ENCODE measurements at regions of chr14 and their contacts with region 1.

Region 1: DNA sequence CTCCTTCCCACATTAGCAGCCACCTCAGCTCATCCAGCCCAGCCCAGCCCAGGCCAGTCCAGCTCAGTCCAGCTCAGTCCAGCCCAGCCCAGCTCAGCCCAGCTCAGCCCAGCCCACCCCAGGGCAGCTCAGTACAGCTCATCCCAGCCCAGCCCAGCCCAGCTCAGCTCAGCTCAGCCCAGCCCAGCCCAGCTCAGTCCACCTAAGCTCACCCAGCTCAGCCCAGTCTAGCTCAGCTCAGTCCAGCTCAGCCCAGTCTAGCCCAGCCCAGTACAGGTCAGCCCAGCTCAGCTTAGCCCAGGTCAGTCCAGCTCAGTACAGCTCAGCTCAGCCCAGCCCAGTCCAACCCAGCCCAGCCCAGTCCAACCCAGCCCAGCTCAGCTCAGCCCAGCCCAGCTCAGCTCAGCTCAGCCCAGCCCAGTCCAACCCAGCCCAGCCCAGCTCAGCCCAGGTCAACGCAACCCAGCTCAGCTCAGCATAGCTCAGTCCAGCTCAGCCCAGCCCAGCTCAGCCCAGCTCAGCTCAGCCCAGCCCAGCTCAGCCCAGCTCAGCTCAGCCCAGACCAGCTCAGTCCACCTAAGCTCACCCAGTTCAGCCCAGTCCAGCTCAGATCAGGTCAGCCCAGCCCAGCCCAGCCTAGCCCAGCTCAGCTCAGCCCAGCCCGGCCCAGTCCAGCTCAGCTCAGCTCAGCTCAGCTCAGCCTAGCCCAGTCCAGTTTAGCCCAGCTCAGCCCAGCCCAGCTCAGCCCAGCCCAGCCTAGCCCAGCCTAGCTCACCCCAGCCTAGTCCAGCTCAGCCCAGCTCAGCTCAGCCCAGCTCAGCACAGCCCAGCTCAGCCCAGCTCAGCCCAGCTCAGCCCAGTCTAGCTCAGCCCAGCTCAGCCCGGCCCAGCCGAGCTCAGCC is 63.0 kb downstream of the TMEM121 start:
- DNase-seq: peak in 1 of 6 donors; percentile 69
- ATAC-seq: no peak
- H3K4me3 ChIP-seq: no peak overlapping the region
- H3K27ac ChIP-seq: no peak overlapping the region
- H3K4me1 ChIP-seq: no peaks in the 10 kb centered on the region
- H3K27me3 ChIP-seq: no peaks in the 10 kb centered on the region
- CTCF ChIP-seq: no peak

Region 2: DNA sequence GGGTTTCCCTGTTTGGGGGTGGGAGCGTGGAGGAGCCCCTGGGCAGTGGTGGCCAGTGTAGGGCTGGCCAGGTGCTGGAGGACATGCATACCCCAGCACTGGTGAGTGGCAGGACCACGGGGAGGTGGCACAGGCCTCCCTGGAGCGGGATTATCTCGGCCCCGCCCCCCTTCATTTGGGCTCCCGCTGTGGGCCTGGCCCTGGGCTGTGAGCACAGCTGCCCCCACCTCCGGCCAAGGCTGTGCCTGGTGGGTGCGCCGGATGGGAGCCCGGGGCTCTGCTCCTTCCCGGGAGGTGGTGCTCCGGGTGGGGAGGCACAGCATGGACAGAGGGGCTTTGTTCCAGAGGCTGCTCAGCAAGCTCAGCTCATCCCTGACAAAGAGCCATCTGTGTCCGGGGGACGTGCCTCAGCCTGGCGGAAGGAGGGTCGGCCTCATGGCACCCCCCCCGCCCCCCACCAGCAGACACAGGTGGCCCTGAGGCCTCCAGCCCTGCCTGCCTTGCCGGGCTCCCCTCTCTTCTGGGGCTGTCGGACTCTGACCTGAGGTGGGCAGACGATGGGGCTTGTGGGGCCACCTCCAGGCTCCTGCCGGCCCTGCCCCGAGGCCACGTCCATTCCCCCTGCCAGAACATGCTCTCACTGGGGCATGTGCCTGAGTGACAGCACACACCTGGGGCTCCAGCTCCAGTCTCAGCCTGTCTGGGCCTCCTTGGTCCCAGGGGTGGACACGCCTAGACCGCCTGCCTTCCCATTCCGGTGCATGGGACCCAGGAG is 90.0 kb before region 1 on chr14:
- intact Hi-C with region 1: no loop called
- DNase-seq: peak in 2 of 6 donors; percentile 54 to 66
- ATAC-seq: no peak
- H3K4me3 ChIP-seq: no peak overlapping the region
- H3K27ac ChIP-seq: no peak overlapping the region
- H3K4me1 ChIP-seq: no peaks in the 10 kb centered on the region
- H3K27me3 ChIP-seq: no peaks in the 10 kb centered on the region
- CTCF ChIP-seq: no peak

Region 3: DNA sequence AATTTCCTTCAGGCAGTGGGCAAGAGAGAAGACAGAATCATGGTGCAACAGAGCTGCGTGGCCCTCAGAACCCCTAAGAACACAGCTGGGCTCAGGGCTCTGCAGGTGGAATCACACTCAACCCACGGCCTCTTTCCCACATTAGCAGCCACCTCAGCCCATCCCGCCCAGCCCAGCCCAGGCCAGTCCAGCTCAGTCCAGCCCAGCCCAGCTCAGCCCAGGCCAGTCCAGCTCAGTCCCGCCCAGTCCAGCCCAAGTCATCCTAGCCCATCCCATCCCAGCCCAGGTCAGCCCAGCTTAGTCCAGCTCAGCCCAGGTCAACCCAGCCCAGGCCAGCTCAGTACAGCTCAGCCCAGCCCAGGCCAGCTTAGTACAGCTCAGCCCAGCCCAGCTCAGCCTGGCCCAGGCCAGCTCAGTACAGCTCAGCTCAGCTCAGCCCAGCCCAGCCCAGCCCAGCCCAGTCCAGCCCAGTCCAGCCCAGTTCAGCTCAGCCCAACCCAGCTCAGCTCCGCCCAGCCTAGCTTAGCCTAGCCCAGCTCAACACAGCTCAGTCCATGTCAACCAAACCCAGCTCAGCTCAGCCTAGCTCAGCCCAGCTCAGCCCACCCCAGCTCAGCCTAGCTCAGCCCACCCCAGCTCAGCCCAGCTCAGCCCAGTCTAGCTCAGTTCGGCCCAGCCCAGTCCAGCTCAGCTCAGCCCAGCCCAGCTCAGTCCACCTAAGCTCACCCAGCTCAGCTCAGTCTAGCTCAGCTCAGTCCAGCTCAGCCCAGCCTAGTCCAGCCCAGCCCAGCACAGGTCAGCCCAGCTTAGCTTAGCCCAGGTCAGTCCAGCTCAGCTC is 120.1 kb after region 1 on chr14:
- intact Hi-C with region 1: loop called (anchors 5 to 10 kb)
- DNase-seq: peak in 2 of 6 donors; percentile 46 to 67
- ATAC-seq: no peak
- H3K4me3 ChIP-seq: no peak overlapping the region
- H3K27ac ChIP-seq: no peak overlapping the region
- H3K4me1 ChIP-seq: no peaks in the 10 kb centered on the region
- H3K27me3 ChIP-seq: no peaks in the 10 kb centered on the region
- CTCF ChIP-seq: no peak

Region 4: DNA sequence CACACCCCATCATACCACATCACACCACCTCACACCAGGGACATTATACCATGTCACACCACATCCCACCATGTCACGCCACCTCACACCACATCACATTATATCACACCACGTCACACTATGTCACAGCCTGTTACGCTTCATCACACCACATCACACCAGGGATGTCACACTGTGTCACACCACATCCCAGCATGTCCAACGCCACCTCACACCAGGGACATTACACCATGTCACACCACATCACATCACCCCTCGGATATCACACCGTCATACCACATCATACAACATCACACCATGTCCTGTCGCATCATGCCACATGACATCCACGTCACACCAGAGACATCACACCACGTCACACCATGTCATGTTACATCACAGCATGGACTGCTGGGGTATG is 172.4 kb after region 1 on chr14:
- intact Hi-C with region 1: no loop called
- DNase-seq: no peak
- ATAC-seq: no peak
- H3K4me3 ChIP-seq: no peak overlapping the region
- H3K27ac ChIP-seq: no peak overlapping the region
- H3K4me1 ChIP-seq: no peaks in the 10 kb centered on the region
- H3K27me3 ChIP-seq: no peaks in the 10 kb centered on the region
- CTCF ChIP-seq: no peak

Measured in pancreas (tissue), 10 donors.